ENCODE measurements at regions of chr17 and their contacts with region 1.

Region 1: DNA sequence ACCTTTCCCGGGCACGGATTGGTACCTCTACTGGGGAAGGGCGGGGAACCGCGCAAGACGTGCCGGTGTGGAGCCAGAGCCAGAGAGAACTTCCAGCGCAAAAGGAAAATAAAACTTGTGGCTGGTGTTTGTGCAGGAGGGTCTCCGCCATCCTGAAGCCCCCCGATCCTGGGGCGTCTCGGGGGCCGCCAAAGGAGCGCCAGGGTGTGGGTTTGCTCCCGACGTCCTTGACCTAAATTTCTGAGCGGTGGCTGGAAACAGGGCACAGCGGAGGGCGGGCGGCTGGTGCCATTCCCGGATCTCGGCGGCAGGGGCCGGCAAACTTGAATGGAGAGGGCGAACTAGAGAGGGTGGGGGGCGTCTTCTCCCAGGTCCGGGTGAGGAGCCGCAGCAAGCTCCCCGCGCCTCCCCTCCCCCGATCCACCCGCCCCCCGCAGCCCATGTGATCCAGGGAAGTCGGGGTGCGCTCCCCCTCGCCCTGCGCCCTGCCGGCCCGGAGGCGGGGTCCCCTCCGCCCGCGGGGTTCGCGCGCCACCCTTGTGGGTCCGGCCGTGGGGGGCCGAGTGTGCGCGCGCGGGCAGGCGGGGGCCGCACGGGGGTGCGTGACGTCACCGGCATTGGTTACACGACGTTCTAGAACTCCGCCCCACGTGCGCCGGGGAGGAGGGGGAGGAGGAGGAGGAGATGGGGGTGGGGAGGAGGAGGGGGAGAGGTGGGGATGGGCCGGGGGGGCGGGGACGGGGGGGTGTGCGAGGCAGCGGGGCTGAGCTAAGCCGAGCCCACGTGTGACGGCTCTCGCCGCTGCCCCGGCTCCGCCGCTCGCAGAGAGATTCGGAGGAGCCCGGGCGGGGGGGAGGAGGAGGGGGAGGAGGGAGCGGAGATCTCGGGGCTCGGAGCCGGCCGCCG is at the start of gene MSI2:
- DNase-seq: peak; percentile 68 to 90
- ATAC-seq: peak; percentile 88 to 89
- H3K4me3 ChIP-seq: peak within 1 kb of the TSS; percentile 94
- H3K27ac ChIP-seq: peak within 1 kb of the TSS; percentile 94 to 95
- H3K4me1 ChIP-seq: peaks cover 26% of the 10 kb centered on the region; the same call in 2 of the 3 replicates
- CTCF ChIP-seq: no peak
- EP300 ChIP-seq: peak in 1 of 2 experiments; percentile 39; a peak in 3 of 5 replicates
- POLR2A ChIP-seq: peak; percentile 27; the same call in 1 of the 2 replicates
- RAD21 ChIP-seq: no peak
- polyA plus RNA-seq, gene MSI2: 44.4 and 47.5 TPM in 2 replicates

Region 2: GRCh38 chr17:57211543-57211942 is 44.5 kb before region 1 on chr17:
- CTCF ChIA-PET with region 1: no interaction called
- POLR2A ChIA-PET with region 1: no interaction called
- DNase-seq: peak; percentile 17 to 33
- ATAC-seq: peak; percentile 81 to 84; a peak in 5 of 6 replicates
- H3K4me3 ChIP-seq: no peak overlapping the region
- H3K27ac ChIP-seq: peak overlapping the region in 1 of 2 experiments; percentile 33; a peak in 1 of 6 replicates
- H3K4me1 ChIP-seq: peaks cover 26% of the 10 kb centered on the region
- CTCF ChIP-seq: no peak
- EP300 ChIP-seq: no peak
- POLR2A ChIP-seq: no peak
- RAD21 ChIP-seq: no peak

Region 3: DNA sequence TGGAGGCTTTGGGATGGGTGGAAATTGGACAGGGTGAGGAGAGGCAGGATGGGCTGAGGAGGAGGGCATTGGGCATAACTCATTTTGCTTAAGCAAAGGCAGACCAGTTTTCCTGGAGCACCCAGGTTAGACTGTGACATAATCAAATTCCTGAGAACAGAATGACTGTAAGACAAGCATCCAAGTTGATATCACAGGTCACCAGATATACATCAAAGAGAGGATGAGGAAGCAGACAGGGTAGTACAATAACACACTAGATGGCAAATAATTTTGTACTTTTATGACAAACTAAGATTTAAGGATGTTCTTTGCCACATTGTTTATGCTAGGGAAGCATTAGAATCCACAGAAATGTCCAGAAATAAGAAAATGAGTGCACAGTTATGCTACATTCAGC is 23.8 kb before region 1 on chr17:
- CTCF ChIA-PET with region 1: no interaction called
- POLR2A ChIA-PET with region 1: no interaction called
- DNase-seq: no peak
- ATAC-seq: no peak
- H3K4me3 ChIP-seq: no peak overlapping the region
- H3K27ac ChIP-seq: no peak overlapping the region
- H3K4me1 ChIP-seq: no peaks in the 10 kb centered on the region
- CTCF ChIP-seq: no peak
- EP300 ChIP-seq: no peak
- POLR2A ChIP-seq: no peak
- RAD21 ChIP-seq: no peak

Region 4: DNA sequence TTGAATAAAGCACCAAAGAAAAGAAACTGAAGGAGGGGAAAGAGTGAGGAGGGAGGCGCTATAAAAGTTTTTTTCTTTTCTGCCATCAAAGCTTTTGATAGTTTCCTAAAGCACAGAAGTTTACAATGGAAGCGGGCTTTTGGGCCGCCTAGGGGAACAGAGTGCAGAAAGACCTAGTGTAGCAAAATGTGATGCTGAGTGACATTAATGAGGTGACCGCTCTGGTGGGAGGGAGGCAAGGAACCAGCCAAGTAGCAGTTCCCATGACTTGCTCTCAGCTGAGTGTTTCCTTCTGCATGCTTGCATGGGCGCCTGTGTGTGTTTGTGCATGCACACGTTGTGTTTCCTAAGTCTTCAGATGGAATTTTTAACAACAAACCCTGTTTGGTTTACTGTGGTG is 15.8 kb after region 1 on chr17:
- CTCF ChIA-PET with region 1: interaction called, 10 read pairs
- POLR2A ChIA-PET with region 1: no interaction called
- DNase-seq: no peak
- ATAC-seq: no peak
- H3K4me3 ChIP-seq: no peak overlapping the region
- H3K27ac ChIP-seq: no peak overlapping the region
- H3K4me1 ChIP-seq: no peaks in the 10 kb centered on the region
- CTCF ChIP-seq: no peak
- EP300 ChIP-seq: no peak
- POLR2A ChIP-seq: no peak
- RAD21 ChIP-seq: no peak

Region 5: DNA sequence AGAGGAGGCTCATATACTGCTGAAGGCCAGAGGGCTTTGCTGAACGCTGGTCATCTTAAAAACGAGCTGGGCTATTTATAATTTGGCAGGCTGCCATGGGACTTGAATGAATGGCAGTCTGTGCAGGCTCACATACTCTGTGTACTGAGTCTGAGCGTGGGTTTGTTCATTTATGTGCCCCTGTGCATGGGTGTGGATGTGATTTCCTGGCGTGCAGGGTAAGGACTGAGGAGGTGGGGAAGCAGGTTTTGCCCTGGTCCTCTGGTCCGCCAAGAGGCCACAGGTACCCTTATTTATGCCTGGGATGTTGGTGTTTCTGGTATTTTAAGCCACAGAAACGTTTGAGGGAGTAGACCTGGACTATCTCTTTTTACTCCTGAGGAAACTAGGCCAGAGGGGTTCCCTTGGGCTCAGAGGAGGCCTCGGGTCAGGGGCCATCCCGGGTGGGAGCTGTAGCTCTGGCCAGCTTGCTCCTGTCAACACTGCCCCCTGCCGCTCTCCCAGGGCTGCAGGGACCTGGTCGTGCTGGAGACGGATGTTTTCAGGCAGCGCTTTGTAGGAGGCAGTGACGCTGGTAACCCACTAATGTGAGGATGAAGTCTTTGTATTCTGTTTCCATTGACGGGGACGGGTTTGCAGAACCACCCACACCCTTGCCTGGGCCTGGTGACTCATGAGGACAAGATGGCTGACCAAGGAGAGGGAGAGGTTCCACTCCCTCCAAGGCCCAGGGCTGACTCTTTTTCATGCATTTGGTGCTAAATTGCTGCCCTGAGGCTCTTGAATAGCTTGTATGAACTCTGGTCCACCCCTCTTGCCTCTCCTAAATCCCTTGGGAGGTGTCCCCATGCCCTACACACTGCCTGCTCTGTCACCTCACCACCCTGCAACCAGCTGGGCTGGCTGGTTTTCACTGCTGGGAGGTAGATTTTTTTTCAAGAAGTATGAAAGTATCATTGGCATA is 184.8 kb after region 1 on chr17:
- CTCF ChIA-PET with region 1: interaction called, 6 read pairs
- POLR2A ChIA-PET with region 1: interaction called, 12 read pairs
- DNase-seq: peak; percentile 59 to 77
- ATAC-seq: peak; percentile 68 to 77
- H3K4me3 ChIP-seq: no peak overlapping the region
- H3K27ac ChIP-seq: peak overlapping the region; percentile 82 to 85
- H3K4me1 ChIP-seq: peaks cover 96% of the 10 kb centered on the region
- CTCF ChIP-seq: peak; percentile 47
- EP300 ChIP-seq: no peak
- POLR2A ChIP-seq: no peak
- RAD21 ChIP-seq: peak; percentile 59 to 60; a peak in 4 of 5 replicates

Measured in A549 (cell line).